Activated CD4-positive, alpha-beta memory T cell treated with anti-CD3 and anti-CD28 coated beads, Interleukin-2, amount 10 ng/mL, durations not matched to agents 7 days and 5 days (primary cell): ENCODE measurements at regions of chr17 and their contacts with region 1.

Region 1: DNA sequence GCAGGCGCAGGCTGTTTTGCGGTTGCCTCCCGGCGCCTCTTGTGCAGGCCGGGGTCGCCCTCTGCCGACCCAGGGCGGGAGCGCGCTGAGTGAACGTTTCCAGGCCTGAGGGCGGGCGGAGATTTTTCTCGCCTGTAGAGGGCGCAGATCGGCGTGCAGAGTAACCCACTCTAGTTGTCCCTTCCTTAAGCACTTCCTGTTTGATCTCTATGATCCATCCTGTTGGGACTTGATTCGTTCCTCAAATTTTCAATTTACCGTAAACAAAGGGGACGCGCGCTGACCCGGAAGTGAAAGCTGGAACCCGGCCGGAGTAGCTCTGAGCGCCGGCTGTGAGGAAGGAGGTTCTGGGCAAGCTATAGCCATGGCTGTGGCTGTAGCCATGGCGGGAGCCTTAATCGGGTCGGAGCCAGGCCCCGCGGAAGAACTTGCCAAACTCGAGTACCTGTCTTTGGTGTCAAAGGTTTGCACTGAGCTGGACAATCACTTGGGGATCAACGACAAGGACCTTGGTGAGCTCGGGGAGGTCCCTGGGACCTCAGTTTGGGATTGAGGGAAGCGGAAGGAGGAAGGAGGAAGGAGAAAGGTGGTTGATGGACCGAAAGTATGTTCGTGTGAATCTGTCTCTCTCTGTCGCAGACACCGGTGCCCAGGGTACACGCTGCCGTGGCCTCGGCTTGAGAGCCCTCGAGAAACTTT is at the start of gene DHX8:
- DNase-seq: peak; percentile 99
- H3K4me3 Mint-ChIP-seq: peak within 1 kb of the TSS; percentile 100
- H3K27ac Mint-ChIP-seq: peak within 1 kb of the TSS; percentile 98
- H3K4me1 Mint-ChIP-seq: peaks cover 26% of the 10 kb centered on the region
- H3K27me3 Mint-ChIP-seq: no peaks in the 10 kb centered on the region
- total RNA-seq, gene DHX8: 59.8 to 61.3 TPM

Region 2: GRCh38 chr17:43388359-43389045 is 95.3 kb before region 1 on chr17:
- CTCF ChIA-PET with region 1: interaction called, 239 read pairs
- POLR2A ChIA-PET with region 1: interaction called, 115 read pairs
- DNase-seq: peak; percentile 93
- H3K4me3 Mint-ChIP-seq: peak overlapping the region; percentile 85
- H3K27ac Mint-ChIP-seq: peak overlapping the region; percentile 98
- H3K4me1 Mint-ChIP-seq: peaks cover 18% of the 10 kb centered on the region
- H3K27me3 Mint-ChIP-seq: no peaks in the 10 kb centered on the region

Region 3: GRCh38 chr17:43393944-43394482 is 89.8 kb before region 1 on chr17:
- CTCF ChIA-PET with region 1: interaction called, 239 read pairs
- POLR2A ChIA-PET with region 1: interaction called, 115 read pairs
- DNase-seq: peak; percentile 91
- H3K4me3 Mint-ChIP-seq: no peak overlapping the region
- H3K27ac Mint-ChIP-seq: peak overlapping the region; percentile 47
- H3K4me1 Mint-ChIP-seq: peaks cover 50% of the 10 kb centered on the region
- H3K27me3 Mint-ChIP-seq: no peaks in the 10 kb centered on the region

Region 4: DNA sequence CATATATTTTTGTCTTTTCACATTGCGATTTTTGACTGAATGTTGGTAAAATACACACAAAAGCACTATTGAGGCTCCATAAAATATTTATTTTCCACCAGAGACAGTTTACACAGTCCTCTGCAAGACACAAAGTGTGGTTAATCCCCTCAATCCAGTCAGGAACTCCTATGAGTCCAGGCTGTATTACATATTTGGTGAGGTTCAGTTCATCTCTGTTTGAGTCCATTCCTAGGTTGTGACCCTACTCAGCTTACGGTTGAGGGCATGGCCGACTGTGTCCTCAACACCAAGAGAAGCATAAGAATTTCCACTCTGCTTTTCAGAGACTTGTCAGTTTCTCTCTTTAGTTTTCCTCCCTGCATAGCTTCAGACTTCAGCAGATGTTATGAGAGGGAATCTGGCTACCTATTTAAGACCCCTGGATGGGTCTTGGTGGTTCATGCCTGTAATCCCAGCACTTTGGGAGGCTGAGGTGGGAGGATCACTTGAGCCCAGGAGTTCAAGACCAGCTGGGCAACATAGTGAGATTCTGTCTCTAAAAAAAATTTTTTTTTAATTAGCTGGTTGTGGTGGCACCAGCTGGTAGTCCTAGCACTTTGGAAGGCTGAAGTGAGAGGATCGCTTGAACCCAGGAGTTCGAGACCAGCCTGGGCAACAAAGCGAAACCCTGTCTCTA is 59.9 kb before region 1 on chr17:
- CTCF ChIA-PET with region 1: interaction called, 13 read pairs
- POLR2A ChIA-PET with region 1: interaction called, 3 read pairs
- DNase-seq: no peak
- H3K4me3 Mint-ChIP-seq: no peak overlapping the region
- H3K27ac Mint-ChIP-seq: no peak overlapping the region
- H3K4me1 Mint-ChIP-seq: no peaks in the 10 kb centered on the region
- H3K27me3 Mint-ChIP-seq: peaks cover 8% of the 10 kb centered on the region

Region 5: DNA sequence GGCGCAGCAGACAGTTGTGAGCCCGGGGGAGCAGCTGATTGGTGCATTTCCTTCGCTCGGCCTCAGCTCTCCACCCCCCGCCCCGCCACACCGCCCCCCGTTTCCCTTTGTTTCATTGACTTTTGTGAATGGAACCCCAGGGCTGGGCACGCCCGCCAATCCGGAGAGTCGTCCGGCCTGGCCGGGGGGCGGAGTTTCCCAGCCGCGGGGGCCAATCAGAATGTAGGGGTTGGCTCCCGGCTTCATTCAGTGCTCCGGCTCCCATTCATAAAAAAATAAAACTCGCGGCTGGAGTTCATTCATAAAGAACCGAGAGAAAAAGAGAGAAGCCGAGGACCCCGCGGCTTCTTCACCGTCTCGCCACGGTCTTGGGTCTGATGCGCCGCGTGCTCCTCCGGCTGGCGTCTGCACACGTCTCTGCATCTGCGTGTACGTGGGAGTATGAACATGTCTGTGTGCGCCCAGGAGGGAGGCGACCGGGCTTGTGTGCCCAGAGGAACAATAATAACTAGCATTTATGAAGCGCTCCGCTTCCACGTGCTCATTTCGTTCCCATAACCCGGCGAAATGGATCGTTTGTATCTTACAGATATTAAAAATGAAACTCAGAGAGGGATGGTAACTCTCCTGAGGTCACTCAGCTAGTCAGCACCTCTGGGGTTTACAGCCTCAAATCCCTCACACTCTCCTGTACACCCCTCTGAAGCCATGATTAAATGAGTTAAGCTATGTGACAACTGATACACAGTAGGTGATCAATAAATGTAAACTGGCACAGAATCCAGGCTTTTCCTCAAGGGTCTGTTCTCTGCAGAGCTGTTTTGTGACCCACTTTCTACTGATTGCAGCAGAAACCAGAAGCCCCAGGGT is 62.7 kb after region 1 on chr17 and contains the start of gene ETV4:
- CTCF ChIA-PET with region 1: interaction called, 12 read pairs
- POLR2A ChIA-PET with region 1: no interaction called
- DNase-seq: peak; percentile 94
- H3K4me3 Mint-ChIP-seq: peak within 1 kb of the TSS; percentile 75
- H3K27ac Mint-ChIP-seq: no peak within 1 kb of the TSS
- H3K4me1 Mint-ChIP-seq: peaks cover 16% of the 10 kb centered on the region
- H3K27me3 Mint-ChIP-seq: peaks cover 45% of the 10 kb centered on the region
- total RNA-seq, gene ETV4: 3.6 to 4.0 TPM

Region 6: DNA sequence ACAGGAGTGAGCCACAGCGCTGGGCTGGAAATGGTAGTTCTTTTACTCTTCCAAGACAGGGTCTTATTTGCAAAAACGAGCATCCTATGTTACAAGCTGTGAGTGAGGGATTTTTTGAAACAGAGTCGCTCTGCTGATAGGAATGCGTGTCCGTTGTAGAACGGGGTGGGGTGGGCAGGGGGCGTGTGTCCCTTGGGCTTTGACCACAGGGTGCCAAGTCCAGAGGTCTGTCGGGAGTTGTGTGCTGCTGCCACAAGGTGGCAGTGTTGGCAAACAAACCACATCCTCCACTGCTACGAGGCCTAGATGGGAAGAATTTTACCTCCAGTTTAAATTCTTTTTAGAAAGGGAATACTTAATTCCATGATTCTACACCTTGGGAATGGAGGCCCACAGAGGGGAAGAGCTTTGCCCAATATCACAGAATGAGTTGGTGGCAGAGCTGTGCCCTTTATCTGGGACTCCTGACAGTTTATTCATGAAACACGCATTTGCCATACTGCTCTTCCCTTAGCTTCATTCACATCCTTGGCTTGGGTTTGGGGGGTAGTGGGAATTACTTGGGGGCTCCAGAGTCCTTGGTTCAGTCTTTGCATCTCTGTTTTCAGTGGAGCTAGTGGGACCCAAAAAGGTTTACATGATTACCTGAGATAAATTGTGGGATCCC is 92.9 kb after region 1 on chr17:
- CTCF ChIA-PET with region 1: no interaction called
- POLR2A ChIA-PET with region 1: no interaction called
- DNase-seq: peak; percentile 69
- H3K4me3 Mint-ChIP-seq: no peak overlapping the region
- H3K27ac Mint-ChIP-seq: no peak overlapping the region
- H3K4me1 Mint-ChIP-seq: peaks cover 22% of the 10 kb centered on the region
- H3K27me3 Mint-ChIP-seq: peaks cover 6% of the 10 kb centered on the region

Region 7: DNA sequence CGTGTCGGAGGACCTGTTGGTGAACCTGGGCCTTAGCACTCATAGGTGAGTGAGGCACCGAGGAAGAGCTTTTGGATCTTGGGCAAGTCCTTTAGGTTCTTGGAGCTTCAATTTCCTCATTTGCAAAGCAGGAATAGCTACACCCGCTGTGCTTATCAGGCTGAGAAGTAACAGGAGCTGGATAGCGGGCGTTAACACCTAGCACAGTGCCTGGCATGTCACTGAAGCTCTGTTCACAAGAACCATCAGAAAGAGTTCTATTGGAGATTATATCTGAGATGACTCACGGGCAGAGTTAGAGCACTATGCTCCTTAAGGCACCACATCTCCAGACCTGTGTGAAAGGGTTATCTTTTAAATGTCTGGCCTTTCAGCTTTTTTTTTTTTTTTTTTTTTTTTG is 165.1 kb after region 1 on chr17:
- CTCF ChIA-PET with region 1: no interaction called
- POLR2A ChIA-PET with region 1: no interaction called
- DNase-seq: no peak
- H3K4me3 Mint-ChIP-seq: no peak overlapping the region
- H3K27ac Mint-ChIP-seq: no peak overlapping the region
- H3K4me1 Mint-ChIP-seq: peaks cover 13% of the 10 kb centered on the region
- H3K27me3 Mint-ChIP-seq: peaks cover 17% of the 10 kb centered on the region